Left ventricle myocardium inferior (tissue), 1 donor: ENCODE measurements at regions of chr21 and their contacts with region 1.

Region 1: DNA sequence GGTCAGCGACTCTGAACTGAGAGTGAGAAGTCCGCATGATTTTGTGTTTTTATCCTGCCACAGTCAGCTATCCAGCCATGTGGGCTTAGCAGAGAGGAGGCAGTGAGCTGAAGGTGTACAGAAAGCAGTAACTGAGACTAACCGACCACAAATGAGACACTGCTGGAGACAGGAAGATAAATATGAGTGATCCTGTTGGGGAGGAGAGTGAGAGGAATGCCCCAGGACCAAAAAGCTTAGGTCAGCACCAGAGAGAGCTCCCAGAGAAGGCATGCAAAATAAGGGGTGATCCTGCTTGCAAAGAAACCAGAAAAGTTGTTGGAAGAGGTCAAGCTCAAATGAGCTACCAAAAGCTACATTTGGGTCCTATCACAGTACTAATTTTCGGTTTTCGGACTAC is 63.7 kb downstream of the HLCS start:
- DNase-seq: no peak
- H3K4me3 ChIP-seq: no peak overlapping the region
- H3K27ac ChIP-seq: no peak overlapping the region
- H3K4me1 ChIP-seq: no peaks in the 10 kb centered on the region
- H3K27me3 ChIP-seq: no peaks in the 10 kb centered on the region
- CTCF ChIP-seq: no peak

Region 2: GRCh38 chr21:36555199-36555800 is 347.5 kb before region 1 on chr21:
- intact Hi-C with region 1: loop called (anchors 5 kb)
- DNase-seq: no peak
- H3K4me3 ChIP-seq: no peak overlapping the region
- H3K27ac ChIP-seq: no peak overlapping the region
- H3K4me1 ChIP-seq: peaks cover 14% of the 10 kb centered on the region
- H3K27me3 ChIP-seq: peaks cover 49% of the 10 kb centered on the region
- CTCF ChIP-seq: no peak

Region 3: DNA sequence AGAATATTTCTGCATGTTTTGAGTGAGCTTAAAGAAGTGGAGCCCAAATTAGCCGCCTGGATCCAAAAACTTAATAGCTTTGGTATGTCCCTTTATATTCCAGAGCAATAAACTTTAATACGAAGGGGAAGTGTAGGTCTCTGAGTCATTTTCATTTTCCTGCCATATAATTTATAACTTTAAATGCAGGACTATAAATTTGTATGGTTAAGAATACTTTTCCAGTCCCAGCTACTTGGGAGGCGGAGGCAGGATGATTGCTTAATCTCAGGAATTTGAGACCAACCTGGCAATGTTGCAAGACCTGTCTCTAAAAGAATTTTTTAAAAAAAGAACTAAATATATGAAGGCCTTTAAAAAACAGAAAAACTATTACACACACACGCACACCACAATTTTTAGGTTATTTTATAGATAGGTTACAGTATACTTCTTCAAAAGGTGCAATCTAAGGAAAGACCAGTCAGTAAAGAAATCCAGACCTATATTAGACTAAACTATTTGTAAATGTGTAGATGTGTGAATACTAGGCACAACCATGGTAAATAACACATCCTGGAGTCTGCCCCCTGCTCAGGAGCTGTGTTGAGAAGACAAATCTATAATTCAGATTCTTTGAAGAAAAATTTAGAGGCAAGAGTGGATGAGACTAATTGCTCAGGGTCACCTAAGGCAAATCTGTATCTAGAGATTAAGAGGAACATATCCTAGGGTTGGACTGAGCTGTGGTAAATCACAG is 250.6 kb after region 1 on chr21:
- intact Hi-C with region 1: no loop called
- DNase-seq: no peak
- H3K4me3 ChIP-seq: no peak overlapping the region
- H3K27ac ChIP-seq: peak overlapping the region; percentile 40
- H3K4me1 ChIP-seq: peaks cover 12% of the 10 kb centered on the region
- H3K27me3 ChIP-seq: no peaks in the 10 kb centered on the region
- CTCF ChIP-seq: no peak